CD4-positive, alpha-beta memory T cell (primary cell): ENCODE measurements at regions of chr20 and their contacts with region 1.

Region 1: DNA sequence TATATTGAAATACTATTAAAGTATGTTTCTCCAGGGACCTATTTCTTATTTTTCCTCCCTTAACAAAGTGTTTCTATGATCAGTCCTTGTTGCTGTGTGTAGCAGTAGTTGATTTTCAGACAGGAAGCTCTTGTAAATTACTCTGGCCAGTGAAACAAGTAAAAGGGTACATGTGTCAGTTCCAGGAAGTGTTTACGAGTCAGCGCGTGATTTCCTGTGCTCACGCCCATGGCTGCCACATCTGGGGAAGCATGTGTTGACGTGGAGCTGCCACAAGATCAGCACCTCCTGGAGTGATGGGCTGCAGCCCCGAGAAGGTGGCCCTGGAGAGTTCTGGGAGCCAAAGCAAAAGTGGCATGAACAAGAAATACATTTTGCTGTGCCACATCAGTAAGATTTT is 38.6 kb upstream of the GGTLC1 start:
- DNase-seq: peak; percentile 79 to 85 (median 83)
- H3K4me3 ChIP-seq: peak overlapping the region in 1 of 2 donors; percentile 34
- H3K4me3 Mint-ChIP-seq: peak overlapping the region; percentile 61 to 85 (median 68)
- H3K27ac ChIP-seq: peak overlapping the region; percentile 45
- H3K27ac Mint-ChIP-seq: peak overlapping the region; percentile 88 to 96 (median 95)
- H3K4me1 ChIP-seq: peaks cover 34% of the 10 kb centered on the region
- H3K4me1 Mint-ChIP-seq: peaks cover 20 to 53% (median 31%) of the 10 kb centered on the region in 4 donors
- H3K27me3 ChIP-seq: no peaks in the 10 kb centered on the region
- H3K27me3 Mint-ChIP-seq: no peaks in the 10 kb centered on the region

Region 2: GRCh38 chr20:23995905-23996666 is 31.1 kb before region 1 on chr20:
- CTCF ChIA-PET with region 1: interaction called, 20 read pairs
- POLR2A ChIA-PET with region 1: no interaction called
- intact Hi-C with region 1: no loop called
- DNase-seq: peak in 4 of 5 donors; percentile 30 to 45 (median 41)
- H3K4me3 ChIP-seq: no peak overlapping the region
- H3K4me3 Mint-ChIP-seq: peak overlapping the region in 1 of 8 donors; percentile 15
- H3K27ac ChIP-seq: no peak overlapping the region
- H3K27ac Mint-ChIP-seq: peak overlapping the region in 1 of 7 donors; percentile 11
- H3K4me1 ChIP-seq: no peaks in the 10 kb centered on the region
- H3K4me1 Mint-ChIP-seq: no peaks in the 10 kb centered on the region
- H3K27me3 ChIP-seq: no peaks in the 10 kb centered on the region
- H3K27me3 Mint-ChIP-seq: peaks cover 0 to 2% of the 10 kb centered on the region in 2 donors

Region 3: DNA sequence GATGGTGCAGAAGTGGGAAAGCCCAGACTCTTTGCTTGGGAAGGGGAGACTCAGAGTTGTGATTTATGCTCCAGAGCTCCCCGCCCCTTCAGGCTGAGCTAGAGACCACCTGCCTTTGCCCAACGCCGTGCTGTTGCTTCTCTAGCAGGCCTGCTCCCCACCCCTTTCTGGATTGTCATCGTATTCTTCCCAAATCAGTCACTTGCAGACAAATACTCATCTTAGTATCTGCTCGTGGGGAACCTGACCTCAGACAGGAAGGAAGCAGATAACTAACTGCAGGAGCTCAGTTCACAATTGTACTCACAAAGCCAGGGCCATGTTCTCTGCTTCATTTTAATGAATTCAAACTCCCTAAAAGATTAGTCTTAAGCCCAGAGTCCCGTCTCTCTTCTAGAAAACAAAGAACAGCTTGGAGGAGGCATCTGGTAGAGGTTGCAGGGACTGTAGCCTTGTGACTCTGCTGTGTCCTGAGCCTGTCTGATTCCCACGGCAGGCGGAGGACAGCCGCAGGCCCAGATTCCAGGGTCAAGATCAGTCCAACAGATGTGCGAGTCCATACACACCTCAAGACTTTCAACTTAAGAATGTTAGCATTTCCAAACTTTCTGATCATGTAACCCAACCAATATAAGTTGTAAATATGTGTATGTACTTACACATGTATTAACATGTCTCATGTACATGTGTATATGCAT is 18.5 kb after region 1 on chr20:
- CTCF ChIA-PET with region 1: interaction called, 12 read pairs
- POLR2A ChIA-PET with region 1: interaction called, 25 read pairs
- intact Hi-C with region 1: loop called (anchors 1 kb)
- DNase-seq: peak in 3 of 5 donors; percentile 18 to 31 (median 19)
- H3K4me3 ChIP-seq: no peak overlapping the region
- H3K4me3 Mint-ChIP-seq: peak overlapping the region in 7 of 8 donors; percentile 7 to 80 (median 60)
- H3K27ac ChIP-seq: no peak overlapping the region
- H3K27ac Mint-ChIP-seq: peak overlapping the region; percentile 50 to 91 (median 68)
- H3K4me1 ChIP-seq: peaks cover 36% of the 10 kb centered on the region
- H3K4me1 Mint-ChIP-seq: peaks cover 27 to 58% (median 43%) of the 10 kb centered on the region in 4 donors
- H3K27me3 ChIP-seq: no peaks in the 10 kb centered on the region
- H3K27me3 Mint-ChIP-seq: no peaks in the 10 kb centered on the region

Region 4: DNA sequence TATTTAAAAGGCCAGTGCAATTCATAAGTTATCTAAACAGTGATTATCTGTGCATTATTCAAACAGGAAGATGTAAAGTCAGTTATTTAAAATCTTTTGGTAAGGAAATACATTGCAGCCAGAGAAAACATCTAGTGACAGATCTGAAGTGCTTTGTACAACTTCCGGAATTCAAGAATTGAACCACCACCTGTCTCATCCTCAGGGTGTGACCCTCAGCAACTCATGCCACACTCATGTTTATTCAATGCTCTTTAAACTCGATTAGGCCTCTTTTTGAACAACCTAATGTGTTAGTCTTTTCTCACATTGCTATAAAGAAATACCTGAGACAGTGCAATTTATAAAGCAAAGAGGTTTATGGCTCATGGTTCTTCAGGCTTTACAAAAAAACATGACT is 23.9 kb after region 1 on chr20:
- CTCF ChIA-PET with region 1: interaction called, 12 read pairs
- POLR2A ChIA-PET with region 1: interaction called, 25 read pairs
- intact Hi-C with region 1: no loop called
- DNase-seq: peak in 1 of 5 donors; percentile 13
- H3K4me3 ChIP-seq: no peak overlapping the region
- H3K4me3 Mint-ChIP-seq: peak overlapping the region in 5 of 8 donors; percentile 10 to 71 (median 37)
- H3K27ac ChIP-seq: no peak overlapping the region
- H3K27ac Mint-ChIP-seq: peak overlapping the region; percentile 67 to 92 (median 90)
- H3K4me1 ChIP-seq: peaks cover 46% of the 10 kb centered on the region
- H3K4me1 Mint-ChIP-seq: peaks cover 16 to 52% (median 36%) of the 10 kb centered on the region in 4 donors
- H3K27me3 ChIP-seq: no peaks in the 10 kb centered on the region
- H3K27me3 Mint-ChIP-seq: no peaks in the 10 kb centered on the region

Region 5: DNA sequence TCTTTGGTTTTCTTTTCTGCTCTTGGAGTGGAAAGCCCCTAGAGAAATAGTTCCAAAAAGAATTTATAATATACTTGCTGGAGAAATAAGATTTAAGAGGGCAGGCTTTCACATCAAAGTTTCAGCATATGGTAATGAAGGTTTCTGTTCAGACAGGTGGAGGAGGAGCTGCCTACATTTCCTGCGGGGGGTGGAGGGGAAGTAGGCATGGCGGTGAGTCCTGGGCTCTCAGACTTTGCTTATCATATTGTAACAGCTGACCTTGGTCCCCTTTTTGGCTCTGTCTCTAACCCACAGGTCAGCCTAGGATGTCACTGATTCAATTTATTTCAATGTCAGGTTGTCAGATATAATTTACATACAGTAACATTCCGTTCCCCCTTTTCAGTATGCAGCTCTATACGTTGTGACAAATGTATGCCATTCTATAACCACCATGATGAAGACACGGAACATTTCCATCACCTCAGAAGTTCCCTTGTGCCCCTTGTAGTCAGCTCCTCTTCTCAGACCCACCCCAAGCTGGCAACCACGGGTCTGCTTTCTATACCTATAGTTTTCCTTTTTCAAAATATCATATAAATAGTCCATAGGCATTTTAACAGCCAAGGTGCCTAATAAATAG is 39.0 kb after region 1 on chr20:
- CTCF ChIA-PET with region 1: interaction called, 4 read pairs
- POLR2A ChIA-PET with region 1: interaction called, 11 read pairs
- intact Hi-C with region 1: loop called (anchors 5 kb)
- DNase-seq: peak in 4 of 5 donors; percentile 22 to 33 (median 26)
- H3K4me3 ChIP-seq: no peak overlapping the region
- H3K4me3 Mint-ChIP-seq: peak overlapping the region; percentile 58 to 91 (median 78)
- H3K27ac ChIP-seq: no peak overlapping the region
- H3K27ac Mint-ChIP-seq: peak overlapping the region; percentile 7 to 90 (median 56)
- H3K4me1 ChIP-seq: peaks cover 13% of the 10 kb centered on the region
- H3K4me1 Mint-ChIP-seq: peaks cover 10 to 13% (median 11%) of the 10 kb centered on the region in 4 donors
- H3K27me3 ChIP-seq: no peaks in the 10 kb centered on the region
- H3K27me3 Mint-ChIP-seq: no peaks in the 10 kb centered on the region